ENCODE measurements at regions of chr11 and their contacts with region 1.

Region 1: GRCh38 chr11:76161261-76161961 is 44.9 kb downstream of the WNT11 start:
- DNase-seq: no peak
- H3K4me3 ChIP-seq: no peak overlapping the region
- H3K27ac ChIP-seq: no peak overlapping the region
- H3K4me1 ChIP-seq: no peaks in the 10 kb centered on the region
- H3K27me3 ChIP-seq: no peaks in the 10 kb centered on the region
- CTCF ChIP-seq: no peak

Region 2: DNA sequence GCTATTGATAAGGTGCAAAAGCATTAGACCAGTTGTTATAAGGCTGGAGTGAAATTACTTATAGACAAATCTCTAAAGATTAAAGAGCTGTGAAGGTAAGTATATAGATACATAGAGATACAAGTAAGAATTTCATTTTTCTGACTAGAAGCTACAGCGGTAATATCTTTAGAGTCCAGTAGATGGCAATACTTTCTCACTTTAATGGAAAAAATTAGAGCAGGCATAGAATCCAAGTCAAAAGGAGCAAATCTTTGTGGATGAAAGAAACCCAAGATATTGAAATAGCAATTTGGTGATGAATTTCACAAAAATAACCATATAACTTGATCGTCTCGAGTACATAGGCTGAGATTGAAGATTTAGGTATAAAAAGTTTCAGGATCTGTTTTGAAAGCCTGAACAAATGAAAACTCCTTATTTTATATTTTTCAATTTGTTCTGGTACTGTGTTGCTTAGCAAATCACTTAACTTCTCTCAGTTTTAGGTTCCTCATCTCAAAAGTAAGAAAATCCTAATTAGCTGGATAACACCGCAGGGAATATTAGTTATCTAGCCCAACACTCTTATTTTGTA is 264.5 kb before region 1 on chr11:
- CTCF ChIA-PET with region 1: no interaction called
- dilution Hi-C with region 1: loop called (anchors 25 kb)
- in situ Hi-C with region 1: loop called in 1 of 2 experiments (anchors 5 kb)
- intact Hi-C with region 1: no loop called
- DNase-seq: peak; percentile 35
- H3K4me3 ChIP-seq: no peak overlapping the region
- H3K27ac ChIP-seq: no peak overlapping the region
- H3K4me1 ChIP-seq: no peaks in the 10 kb centered on the region
- H3K27me3 ChIP-seq: no peaks in the 10 kb centered on the region
- CTCF ChIP-seq: peak; percentile 59 to 60

Region 3: GRCh38 chr11:76120513-76121101 is 40.8 kb before region 1 on chr11:
- CTCF ChIA-PET with region 1: no interaction called
- dilution Hi-C with region 1: loop called (anchors 5 kb)
- in situ Hi-C with region 1: no loop called
- intact Hi-C with region 1: no loop called
- DNase-seq: no peak
- H3K4me3 ChIP-seq: no peak overlapping the region
- H3K27ac ChIP-seq: no peak overlapping the region
- H3K4me1 ChIP-seq: no peaks in the 10 kb centered on the region
- H3K27me3 ChIP-seq: no peaks in the 10 kb centered on the region
- CTCF ChIP-seq: no peak

Measured in mammary epithelial cell (primary cell).